Ascending aorta (tissue), 2 donors: ENCODE measurements at regions of chr1 and their contacts with region 1.

Region 1: DNA sequence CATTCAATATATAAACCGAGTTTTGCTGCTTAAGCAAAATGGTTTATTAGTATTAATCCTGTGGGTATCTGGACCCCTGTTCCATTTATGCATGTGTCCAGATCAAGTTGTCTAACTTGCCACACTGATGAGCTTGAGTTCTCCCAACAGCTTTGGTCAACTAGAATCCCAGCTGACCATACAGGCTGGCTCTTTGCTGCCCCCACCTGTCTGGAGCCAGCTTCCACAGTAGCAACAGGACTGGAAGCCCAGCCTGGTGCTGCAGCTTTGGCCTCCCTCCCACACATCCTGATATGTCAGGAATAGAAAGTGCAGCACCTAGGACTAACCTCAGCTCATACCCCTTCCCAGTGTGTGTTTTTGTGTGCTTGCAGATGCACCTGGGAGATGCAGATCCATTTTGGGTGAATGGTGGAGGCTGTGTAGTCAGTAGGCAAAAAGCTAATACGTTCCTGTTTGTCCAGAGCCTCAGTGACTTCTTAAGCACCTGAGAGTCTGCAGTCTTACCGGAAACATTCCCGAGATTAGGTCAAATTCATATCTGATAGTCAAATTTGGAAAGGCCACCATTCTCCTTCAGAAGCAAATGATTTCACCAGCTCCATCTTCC is 40.9 kb upstream of the BEND5 start:
- DNase-seq: peak in 1 of 2 donors; percentile 71
- H3K4me3 ChIP-seq: no peak overlapping the region
- H3K27ac ChIP-seq: no peak overlapping the region
- H3K4me1 ChIP-seq: no peaks in the 10 kb centered on the region
- H3K27me3 ChIP-seq: no peaks in the 10 kb centered on the region
- CTCF ChIP-seq: peak; percentile 47 to 87 (median 85)

Region 2: DNA sequence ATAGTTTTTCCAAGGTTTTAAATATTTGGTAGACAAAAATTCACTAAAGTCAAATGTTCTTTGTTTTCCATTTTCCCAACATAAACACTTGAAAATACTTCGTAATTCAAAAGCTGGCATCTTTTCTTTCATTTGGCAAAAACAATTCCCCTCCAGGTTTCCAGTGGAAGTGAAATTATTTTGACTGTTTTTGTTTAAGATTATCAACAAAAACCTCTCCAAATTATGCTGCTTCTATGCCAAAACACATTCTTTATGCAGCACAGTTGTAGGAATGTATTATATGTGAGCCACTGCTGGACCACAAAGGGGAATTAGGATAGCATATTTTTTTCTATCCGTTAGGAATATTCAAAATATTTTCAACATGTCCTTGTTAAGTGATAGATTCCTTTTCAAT is 551.0 kb before region 1 on chr1:
- intact Hi-C with region 1: no loop called
- DNase-seq: no peak
- H3K4me3 ChIP-seq: no peak overlapping the region
- H3K27ac ChIP-seq: no peak overlapping the region
- H3K4me1 ChIP-seq: peaks cover 4% of the 10 kb centered on the region in 2 donors
- H3K27me3 ChIP-seq: no peaks in the 10 kb centered on the region
- CTCF ChIP-seq: no peak

Region 3: GRCh38 chr1:48572646-48573261 is 244.9 kb before region 1 on chr1:
- intact Hi-C with region 1: loop called (anchors 2 kb)
- DNase-seq: peak in 1 of 2 donors; percentile 63
- H3K4me3 ChIP-seq: no peak overlapping the region
- H3K27ac ChIP-seq: no peak overlapping the region
- H3K4me1 ChIP-seq: no peaks in the 10 kb centered on the region
- H3K27me3 ChIP-seq: no peaks in the 10 kb centered on the region
- CTCF ChIP-seq: peak; percentile 10 to 71 (median 29)

Region 4: GRCh38 chr1:48677306-48678287 is 140.0 kb before region 1 on chr1:
- intact Hi-C with region 1: loop called (anchors 1 kb)
- DNase-seq: peak in 1 of 2 donors; percentile 79
- H3K4me3 ChIP-seq: no peak overlapping the region
- H3K27ac ChIP-seq: no peak overlapping the region
- H3K4me1 ChIP-seq: peaks cover 0 to 27% of the 10 kb centered on the region in 2 donors
- H3K27me3 ChIP-seq: no peaks in the 10 kb centered on the region
- CTCF ChIP-seq: peak; percentile 49 to 76 (median 72)

Region 5: DNA sequence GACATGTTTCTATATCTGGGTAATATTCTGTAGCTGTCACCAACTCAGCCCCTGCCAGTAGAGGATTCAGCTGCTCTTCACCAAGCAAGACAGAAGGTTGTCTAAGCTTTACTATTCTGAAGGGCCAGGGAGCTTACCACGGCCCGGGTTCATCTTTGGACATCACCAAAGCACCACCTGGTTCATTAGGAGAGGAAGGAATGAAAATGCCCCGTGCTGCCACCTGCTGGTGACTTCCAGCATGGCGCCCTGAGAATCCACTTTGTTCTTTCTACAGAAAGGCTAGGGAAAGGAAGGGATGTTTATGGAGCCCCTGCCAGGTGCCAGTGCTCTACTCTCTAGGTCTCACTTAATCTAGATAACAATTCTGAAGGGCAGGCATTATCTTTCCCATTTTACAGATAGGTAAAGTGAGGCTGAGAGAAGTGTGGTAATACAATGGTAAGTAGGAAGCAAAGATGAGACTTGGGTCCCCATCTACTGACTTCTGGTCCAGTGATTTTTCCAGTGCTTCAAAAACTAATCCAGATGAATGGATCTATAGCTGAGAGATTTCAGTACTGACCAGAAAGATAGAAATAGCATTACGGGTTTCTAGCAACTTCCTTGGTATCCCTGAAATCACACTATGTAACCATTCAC is 120.4 kb before region 1 on chr1:
- intact Hi-C with region 1: loop called (anchors 5 kb)
- DNase-seq: peak in 1 of 2 donors; percentile 78
- H3K4me3 ChIP-seq: no peak overlapping the region
- H3K27ac ChIP-seq: no peak overlapping the region
- H3K4me1 ChIP-seq: no peaks in the 10 kb centered on the region
- H3K27me3 ChIP-seq: no peaks in the 10 kb centered on the region
- CTCF ChIP-seq: peak; percentile 69 to 90 (median 90)

Region 6: DNA sequence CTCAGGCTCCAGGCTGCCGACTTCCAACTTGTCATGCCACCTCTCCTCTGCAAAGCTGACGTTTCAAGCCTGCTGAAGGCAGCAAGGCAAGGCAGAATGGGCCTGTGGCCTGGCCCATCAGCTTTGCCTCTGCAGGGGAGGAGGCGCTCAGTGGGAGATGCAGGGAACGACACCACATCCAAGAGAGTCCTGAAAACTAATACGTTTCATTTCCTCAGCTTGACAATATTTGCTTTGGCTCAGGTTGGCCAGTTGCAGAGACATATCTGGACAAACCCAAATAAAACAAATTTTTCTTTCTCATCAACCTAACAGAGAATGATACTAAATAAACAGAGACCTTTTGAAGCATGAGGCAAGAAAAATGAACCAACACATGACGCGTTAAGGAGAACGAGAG is 76.2 kb before region 1 on chr1:
- intact Hi-C with region 1: loop called (anchors 5 kb)
- DNase-seq: no peak
- H3K4me3 ChIP-seq: no peak overlapping the region
- H3K27ac ChIP-seq: peak overlapping the region; percentile 64 to 69
- H3K4me1 ChIP-seq: peaks cover 0 to 5% of the 10 kb centered on the region in 2 donors
- H3K27me3 ChIP-seq: no peaks in the 10 kb centered on the region
- CTCF ChIP-seq: no peak